ENCODE measurements at regions of chr10 and their contacts with region 1.

Region 1: DNA sequence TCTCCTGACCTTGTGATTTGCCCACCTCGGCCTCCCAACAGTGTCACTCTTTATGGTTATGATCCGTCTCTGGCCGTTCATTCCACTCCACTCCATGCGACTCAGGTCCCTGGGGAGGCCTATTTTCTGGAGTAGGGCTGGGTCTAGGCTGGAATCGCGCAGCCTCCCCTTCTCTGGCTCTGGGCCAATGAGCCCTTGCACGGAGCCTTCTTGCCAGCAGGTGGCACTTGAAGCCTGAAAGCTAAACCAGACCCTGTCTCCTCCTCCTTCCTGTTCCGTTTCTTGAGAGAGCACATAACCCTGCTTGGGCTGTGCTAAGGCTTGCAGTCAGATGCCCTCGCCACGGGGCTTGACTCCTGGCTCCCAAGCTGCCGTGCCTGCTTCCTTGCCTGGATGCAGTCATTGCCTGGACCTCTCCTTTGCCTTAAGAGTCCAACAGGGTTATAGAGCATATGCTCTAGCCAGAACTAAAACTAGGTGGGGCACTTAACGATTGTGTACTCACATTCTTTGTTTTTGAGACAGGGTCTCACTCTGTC is 9.6 kb upstream of the DNAJB12 start:
- DNase-seq: peak; percentile 85
- H3K4me3 ChIP-seq: no peak overlapping the region
- H3K27ac ChIP-seq: no peak overlapping the region
- H3K4me1 ChIP-seq: peaks cover 4% of the 10 kb centered on the region
- H3K27me3 ChIP-seq: no peaks in the 10 kb centered on the region
- CTCF ChIP-seq: peak; percentile 82

Region 2: GRCh38 chr10:72692057-72692910 is 328.0 kb after region 1 on chr10 and contains the start of gene MCU:
- intact Hi-C with region 1: loop called (anchors 10 kb)
- DNase-seq: peak; percentile 98
- H3K4me3 ChIP-seq: peak within 1 kb of the TSS; percentile 71
- H3K27ac ChIP-seq: peak within 1 kb of the TSS; percentile 78
- H3K4me1 ChIP-seq: peaks cover 13% of the 10 kb centered on the region
- H3K27me3 ChIP-seq: no peaks in the 10 kb centered on the region
- CTCF ChIP-seq: no peak
- total RNA-seq, gene MCU: 88.7 to 109 TPM

Region 3: GRCh38 chr10:72834183-72834825 is 470.0 kb after region 1 on chr10:
- intact Hi-C with region 1: loop called (anchors 5 kb)
- DNase-seq: peak; percentile 45
- H3K4me3 ChIP-seq: no peak overlapping the region
- H3K27ac ChIP-seq: no peak overlapping the region
- H3K4me1 ChIP-seq: peaks cover 6% of the 10 kb centered on the region
- H3K27me3 ChIP-seq: no peaks in the 10 kb centered on the region
- CTCF ChIP-seq: peak; percentile 45

Region 4: GRCh38 chr10:72875250-72876055 is 511.1 kb after region 1 on chr10:
- intact Hi-C with region 1: loop called (anchors 2 kb)
- DNase-seq: no peak
- H3K4me3 ChIP-seq: no peak overlapping the region
- H3K27ac ChIP-seq: no peak overlapping the region
- H3K4me1 ChIP-seq: no peaks in the 10 kb centered on the region
- H3K27me3 ChIP-seq: no peaks in the 10 kb centered on the region
- CTCF ChIP-seq: no peak

Region 5: GRCh38 chr10:73060738-73061635 is 696.7 kb after region 1 on chr10:
- intact Hi-C with region 1: loop called (anchors 10 kb)
- DNase-seq: no peak
- H3K4me3 ChIP-seq: no peak overlapping the region
- H3K27ac ChIP-seq: no peak overlapping the region
- H3K4me1 ChIP-seq: no peaks in the 10 kb centered on the region
- H3K27me3 ChIP-seq: no peaks in the 10 kb centered on the region
- CTCF ChIP-seq: peak; percentile 37